Activated CD8-positive, alpha-beta T cell treated with anti-CD3 and anti-CD28 coated beads for 36 hours (primary cell): ENCODE measurements at regions of chr2 and their contacts with region 1.

Region 1: DNA sequence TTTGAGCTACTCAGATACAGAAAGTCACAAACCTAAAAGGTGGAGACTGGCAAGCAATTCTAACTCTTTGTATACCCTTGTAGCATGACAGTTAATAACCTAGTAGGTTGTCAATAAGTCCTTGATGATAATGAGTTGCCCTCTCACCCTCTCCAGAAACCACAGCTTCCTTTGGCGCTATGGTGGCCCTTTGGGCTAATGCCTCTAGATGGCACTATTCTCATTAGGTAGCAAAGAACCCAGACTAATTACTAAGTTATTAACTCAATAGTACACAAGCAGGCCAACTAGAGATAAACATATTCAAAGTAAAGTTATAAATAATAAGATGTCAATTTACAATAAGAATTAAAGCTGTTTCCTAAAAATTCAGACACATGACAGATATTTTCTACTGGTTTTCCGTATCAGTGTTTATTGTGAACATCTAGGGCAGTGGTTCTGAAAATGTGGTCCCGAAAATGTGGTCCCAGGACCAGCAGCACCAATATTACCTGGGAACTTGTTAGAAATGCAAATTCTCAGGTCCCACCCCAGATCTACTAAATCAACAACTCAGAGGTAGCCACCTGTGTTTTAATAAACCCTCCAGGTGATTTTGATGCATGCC is 41.1 kb downstream of the LDAH start:
- DNase-seq: peak; percentile 7
- ATAC-seq: no peak
- H3K4me3 Mint-ChIP-seq: no peak overlapping the region
- H3K27ac Mint-ChIP-seq: no peak overlapping the region
- H3K4me1 Mint-ChIP-seq: no peaks in the 10 kb centered on the region
- H3K27me3 Mint-ChIP-seq: no peaks in the 10 kb centered on the region
- CTCF ChIP-seq: peak; percentile 32

Region 2: GRCh38 chr2:20771299-20771698 is 10.5 kb before region 1 on chr2:
- CTCF ChIA-PET with region 1: interaction called, 17 read pairs
- POLR2A ChIA-PET with region 1: no interaction called
- intact Hi-C with region 1: no loop called
- DNase-seq: no peak
- ATAC-seq: no peak
- H3K4me3 Mint-ChIP-seq: no peak overlapping the region
- H3K27ac Mint-ChIP-seq: no peak overlapping the region
- H3K4me1 Mint-ChIP-seq: no peaks in the 10 kb centered on the region
- H3K27me3 Mint-ChIP-seq: no peaks in the 10 kb centered on the region
- CTCF ChIP-seq: no peak

Region 3: GRCh38 chr2:20797096-20797495 is 15.3 kb after region 1 on chr2:
- CTCF ChIA-PET with region 1: interaction called, 11 read pairs
- POLR2A ChIA-PET with region 1: no interaction called
- intact Hi-C with region 1: no loop called
- DNase-seq: no peak
- ATAC-seq: no peak
- H3K4me3 Mint-ChIP-seq: no peak overlapping the region
- H3K27ac Mint-ChIP-seq: no peak overlapping the region
- H3K4me1 Mint-ChIP-seq: peaks cover 18% of the 10 kb centered on the region
- H3K27me3 Mint-ChIP-seq: no peaks in the 10 kb centered on the region
- CTCF ChIP-seq: no peak

Region 4: DNA sequence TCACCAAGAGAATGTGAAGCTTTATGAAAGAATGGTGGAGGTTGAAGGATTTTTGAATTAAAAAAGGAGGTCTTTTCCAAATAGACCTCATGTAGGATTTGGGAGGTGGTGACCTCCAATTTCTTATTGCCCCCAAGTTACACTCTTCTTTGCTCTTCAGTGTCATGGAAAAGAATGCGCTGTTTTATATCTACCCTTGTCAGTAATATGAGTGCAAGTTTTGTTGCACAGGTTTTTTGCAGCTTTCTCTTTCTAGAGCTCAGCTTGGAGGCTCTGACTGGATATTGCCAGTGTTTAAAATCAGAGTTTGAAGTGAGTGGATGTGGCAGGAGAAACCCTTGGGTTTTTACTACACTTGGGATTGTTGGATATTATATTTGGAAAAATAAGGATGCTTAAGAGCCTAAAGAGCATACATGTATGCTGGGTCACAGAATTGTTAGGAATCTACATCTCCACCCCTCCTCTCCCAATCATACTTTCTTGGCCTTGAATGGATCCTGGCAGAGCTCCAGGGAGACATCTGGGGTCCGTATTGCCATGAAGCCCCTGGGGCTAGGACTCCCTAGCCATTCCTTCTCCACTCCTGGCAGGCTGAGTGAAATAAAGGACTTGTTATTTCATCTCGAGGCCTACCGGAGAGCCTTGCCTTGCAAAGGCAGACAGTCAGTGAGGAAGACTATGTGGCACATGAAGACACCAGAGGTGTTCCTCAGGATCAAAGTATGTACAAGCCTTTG is 218.3 kb after region 1 on chr2:
- CTCF ChIA-PET with region 1: no interaction called
- POLR2A ChIA-PET with region 1: no interaction called
- intact Hi-C with region 1: no loop called
- DNase-seq: peak; percentile 2
- ATAC-seq: no peak
- H3K4me3 Mint-ChIP-seq: no peak overlapping the region
- H3K27ac Mint-ChIP-seq: no peak overlapping the region
- H3K4me1 Mint-ChIP-seq: no peaks in the 10 kb centered on the region
- H3K27me3 Mint-ChIP-seq: no peaks in the 10 kb centered on the region
- CTCF ChIP-seq: no peak